PC-9 (cell line): ENCODE measurements at regions of chr4 and their contacts with region 1.

Region 1: DNA sequence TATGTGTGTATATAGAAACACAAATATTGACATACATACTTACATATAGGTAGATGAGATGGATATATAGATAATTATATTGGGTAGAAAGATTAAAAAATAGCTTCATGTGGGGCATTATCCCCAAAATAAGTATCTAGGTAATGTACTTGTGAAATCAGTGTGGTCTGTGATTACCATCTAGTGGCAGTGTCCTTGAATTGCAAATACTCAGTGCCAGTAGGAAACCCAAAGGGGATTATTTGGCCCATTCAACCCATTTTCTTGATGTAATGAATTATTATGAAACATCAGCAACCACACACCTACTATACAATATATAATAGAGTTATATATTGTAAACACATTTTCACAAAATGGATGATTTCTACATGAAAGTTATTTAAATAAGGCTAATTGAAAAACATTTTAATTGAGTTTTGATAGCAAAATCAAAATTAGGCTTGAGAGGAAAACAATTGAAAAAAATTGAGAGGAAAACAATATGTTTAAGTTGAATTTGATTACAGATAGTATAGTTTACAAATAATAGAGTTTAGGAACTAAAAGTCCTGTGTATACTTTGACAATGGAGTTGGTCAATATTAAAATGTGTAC is 389.4 kb downstream of the GALNTL6 start:
- DNase-seq: no peak
- H3K4me3 ChIP-seq: no peak overlapping the region
- H3K27ac ChIP-seq: no peak overlapping the region
- H3K4me1 ChIP-seq: no peaks in the 10 kb centered on the region
- H3K27me3 ChIP-seq: no peaks in the 10 kb centered on the region
- CTCF ChIP-seq: peak; percentile 67

Region 2: GRCh38 chr4:170990989-170991589 is 1211.5 kb before region 1 on chr4:
- CTCF ChIA-PET with region 1: no interaction called
- POLR2A ChIA-PET with region 1: no interaction called
- intact Hi-C with region 1: loop called (anchors 10 kb)
- DNase-seq: no peak
- H3K4me3 ChIP-seq: no peak overlapping the region
- H3K27ac ChIP-seq: no peak overlapping the region
- H3K4me1 ChIP-seq: no peaks in the 10 kb centered on the region
- H3K27me3 ChIP-seq: no peaks in the 10 kb centered on the region
- CTCF ChIP-seq: peak; percentile 37; the same call in 1 of the 2 replicates

Region 3: DNA sequence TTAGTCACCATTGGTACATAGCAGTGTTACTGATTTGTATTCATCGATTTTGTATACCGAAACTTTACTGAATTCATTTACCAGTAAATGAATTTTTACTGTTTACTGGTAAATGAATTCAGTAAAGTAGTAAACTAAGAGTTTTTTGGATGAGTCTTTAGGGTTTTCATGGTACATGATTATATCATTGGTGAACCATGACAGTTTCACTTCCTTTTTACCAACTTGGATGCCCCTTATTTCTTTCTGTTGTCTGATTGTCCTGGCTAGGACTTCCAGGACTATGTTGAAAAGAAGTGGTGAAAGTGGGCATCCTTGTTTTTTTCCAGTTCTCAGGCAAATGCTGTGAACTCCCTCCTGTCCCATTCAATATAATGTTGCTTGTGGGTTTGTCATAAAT is 105.5 kb after region 1 on chr4:
- CTCF ChIA-PET with region 1: no interaction called
- POLR2A ChIA-PET with region 1: no interaction called
- intact Hi-C with region 1: no loop called
- DNase-seq: no peak
- H3K4me3 ChIP-seq: no peak overlapping the region
- H3K27ac ChIP-seq: no peak overlapping the region
- H3K4me1 ChIP-seq: no peaks in the 10 kb centered on the region
- H3K27me3 ChIP-seq: no peaks in the 10 kb centered on the region
- CTCF ChIP-seq: no peak